ENCODE measurements at regions of chr3 and their contacts with region 1.

Region 1: GRCh38 chr3:51391075-51391567 is at the start of gene RBM15B:
- DNase-seq: peak; percentile 96 to 97 (median 97)
- H3K4me3 ChIP-seq: peak within 1 kb of the TSS; percentile 52 to 74 (median 62)
- H3K4me3 Mint-ChIP-seq: peak within 1 kb of the TSS; percentile 79 to 84
- H3K27ac ChIP-seq: peak within 1 kb of the TSS; percentile 41 to 72
- H3K27ac Mint-ChIP-seq: peak within 1 kb of the TSS; percentile 74 to 89 (median 84)
- H3K4me1 ChIP-seq: peaks cover 38 to 50% of the 10 kb centered on the region in 2 donors
- H3K4me1 Mint-ChIP-seq: peaks cover 59% of the 10 kb centered on the region
- H3K27me3 ChIP-seq: no peaks in the 10 kb centered on the region
- H3K27me3 Mint-ChIP-seq: peaks cover 0 to 2% (median 0%) of the 10 kb centered on the region in 3 donors
- CTCF ChIP-seq: peak; percentile 86
- polyA plus RNA-seq, gene RBM15B: 7.1 to 10.3 (median 9.1) TPM

Region 2: DNA sequence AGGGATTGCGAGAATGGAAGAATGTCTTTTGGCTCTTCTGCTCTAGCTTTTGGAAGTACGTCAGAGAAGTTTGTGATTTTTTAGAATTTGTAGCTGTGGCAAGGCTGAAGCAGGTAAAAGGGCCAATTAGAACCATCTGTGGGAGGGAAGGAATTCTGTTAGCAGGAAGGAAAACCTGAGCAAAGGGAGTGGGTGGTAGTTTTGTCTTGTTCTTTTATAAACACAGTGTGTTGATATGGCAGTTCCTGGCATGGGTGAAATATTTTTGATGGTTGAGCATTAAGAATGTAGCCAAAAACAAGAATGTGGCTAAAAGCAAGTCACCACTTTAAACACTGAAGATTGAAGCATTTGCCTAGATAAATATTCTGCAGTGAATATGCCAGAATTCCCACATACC is 1897.2 kb before region 1 on chr3:
- intact Hi-C with region 1: no loop called
- DNase-seq: no peak
- H3K4me3 ChIP-seq: no peak overlapping the region
- H3K4me3 Mint-ChIP-seq: no peak overlapping the region
- H3K27ac ChIP-seq: no peak overlapping the region
- H3K27ac Mint-ChIP-seq: peak overlapping the region in 2 of 7 donors; percentile 2 to 5
- H3K4me1 ChIP-seq: peaks cover 9% of the 10 kb centered on the region in 2 donors
- H3K4me1 Mint-ChIP-seq: peaks cover 7% of the 10 kb centered on the region
- H3K27me3 ChIP-seq: no peaks in the 10 kb centered on the region
- H3K27me3 Mint-ChIP-seq: peaks cover 0 to 2% (median 1%) of the 10 kb centered on the region in 3 donors
- CTCF ChIP-seq: no peak

Region 3: DNA sequence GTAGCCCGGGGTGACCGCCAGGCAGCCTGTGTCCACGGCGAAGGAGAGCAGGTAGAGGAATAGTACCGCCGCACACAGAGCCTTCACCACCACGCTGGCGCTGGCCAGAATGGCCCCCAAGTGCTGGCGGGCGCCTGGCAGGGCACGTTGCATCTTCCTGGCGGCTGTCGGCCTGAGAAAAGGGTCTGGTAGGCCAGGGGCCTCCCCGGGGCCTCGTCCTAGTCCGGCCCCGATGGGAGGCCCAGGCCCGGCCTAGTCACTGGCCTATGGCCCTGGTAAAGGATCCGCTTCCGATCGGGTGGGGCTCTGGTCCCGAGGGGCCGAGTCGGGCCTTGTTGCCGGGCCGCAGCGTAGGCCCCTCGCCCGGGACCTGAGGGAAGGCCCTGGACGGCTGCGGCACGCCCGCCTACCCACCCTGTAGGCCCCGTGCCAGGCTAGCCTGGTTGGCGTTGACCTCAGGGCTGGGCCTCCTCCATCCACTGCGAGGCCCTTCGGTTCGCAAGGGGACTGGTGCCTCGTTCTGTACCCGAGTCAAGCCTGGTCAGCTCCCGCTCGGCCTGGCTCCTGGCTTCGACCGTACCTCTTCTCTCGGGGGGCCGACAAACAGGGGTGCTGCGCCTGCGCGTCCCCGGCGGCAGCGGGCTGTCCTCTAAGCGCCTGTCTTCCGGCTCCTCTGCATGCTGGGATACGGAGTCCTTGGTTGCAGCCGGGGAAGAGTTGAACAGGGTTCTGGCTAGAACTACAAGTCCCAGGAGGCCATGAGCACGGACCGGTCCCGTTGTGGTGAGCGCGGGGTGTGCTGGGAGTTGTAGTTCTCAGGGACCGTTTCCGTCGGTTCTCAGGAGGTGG is 1032.0 kb before region 1 on chr3 and contains the start of gene TMEM115:
- intact Hi-C with region 1: loop called in 1 of 2 experiments (anchors 10 kb)
- DNase-seq: peak; percentile 94 to 97 (median 96)
- H3K4me3 ChIP-seq: peak within 1 kb of the TSS; percentile 47 to 91 (median 89)
- H3K4me3 Mint-ChIP-seq: peak within 1 kb of the TSS; percentile 90 to 95
- H3K27ac ChIP-seq: peak within 1 kb of the TSS; percentile 57 to 91
- H3K27ac Mint-ChIP-seq: peak within 1 kb of the TSS; percentile 82 to 95 (median 93)
- H3K4me1 ChIP-seq: peaks cover 42 to 45% of the 10 kb centered on the region in 2 donors
- H3K4me1 Mint-ChIP-seq: peaks cover 45% of the 10 kb centered on the region
- H3K27me3 ChIP-seq: peaks cover 0 to 2% of the 10 kb centered on the region in 2 donors
- H3K27me3 Mint-ChIP-seq: peaks cover 0 to 5% (median 1%) of the 10 kb centered on the region in 3 donors
- CTCF ChIP-seq: no peak
- polyA plus RNA-seq, gene TMEM115: 14.5 to 36.2 (median 32.9) TPM

Region 4: DNA sequence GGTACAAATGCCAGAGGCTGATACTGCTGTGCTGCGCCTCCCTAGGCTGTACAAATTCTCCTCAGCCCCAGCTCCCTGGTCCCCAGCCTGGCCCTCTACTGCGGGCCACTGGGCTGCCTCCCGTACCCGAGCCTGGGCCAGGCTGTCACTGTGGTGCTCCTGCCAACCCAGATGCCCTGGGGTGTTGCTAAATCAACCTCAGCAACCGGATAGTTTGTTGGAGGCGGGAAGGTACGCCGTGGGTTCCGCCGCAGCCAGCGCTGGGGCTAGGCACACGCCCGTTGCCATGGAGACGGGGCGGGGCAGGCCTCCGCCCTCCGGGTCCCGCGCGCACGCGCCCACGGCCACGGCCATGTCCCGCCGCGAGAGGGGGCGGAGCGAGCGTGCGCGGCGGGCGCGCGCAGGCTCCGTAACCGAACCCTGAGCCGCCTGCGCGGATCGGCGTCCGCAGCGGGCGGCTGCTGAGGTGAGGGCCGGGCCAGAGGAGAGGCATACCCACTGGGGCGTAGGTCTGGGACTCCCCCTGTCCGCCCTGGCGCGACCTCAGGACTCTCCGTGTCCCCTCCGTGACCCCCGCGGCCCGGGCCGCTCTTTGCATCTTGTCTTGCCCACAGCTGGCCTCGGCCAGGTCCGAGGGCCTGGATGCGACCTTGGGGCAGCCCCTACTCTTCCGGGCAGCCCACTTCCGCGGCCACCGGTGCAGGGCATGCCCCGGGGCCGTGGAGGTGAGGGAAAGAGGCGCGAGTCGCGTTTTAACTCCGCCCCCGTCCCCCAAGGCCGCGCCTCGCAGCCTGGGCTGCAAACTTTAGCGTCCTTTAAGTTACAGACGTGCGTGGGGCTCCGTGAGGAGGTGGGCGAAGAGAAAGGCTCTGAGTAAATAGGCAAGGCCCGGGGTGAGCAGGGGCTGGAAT is 280.0 kb after region 1 on chr3 and contains the start of gene TEX264:
- intact Hi-C with region 1: loop called in 1 of 2 experiments (anchors 2 kb)
- DNase-seq: peak; percentile 94 to 97 (median 95)
- H3K4me3 ChIP-seq: peak within 1 kb of the TSS; percentile 86 to 96 (median 95)
- H3K4me3 Mint-ChIP-seq: peak within 1 kb of the TSS; percentile 87 to 91
- H3K27ac ChIP-seq: peak within 1 kb of the TSS; percentile 87 to 89
- H3K27ac Mint-ChIP-seq: peak within 1 kb of the TSS; percentile 81 to 92 (median 89)
- H3K4me1 ChIP-seq: peaks cover 47 to 72% of the 10 kb centered on the region in 2 donors
- H3K4me1 Mint-ChIP-seq: peaks cover 77% of the 10 kb centered on the region
- H3K27me3 ChIP-seq: no peaks in the 10 kb centered on the region
- H3K27me3 Mint-ChIP-seq: no peaks in the 10 kb centered on the region
- CTCF ChIP-seq: no peak
- polyA plus RNA-seq, gene TEX264: 58.3 to 108 (median 80.8) TPM